T-cell (primary cell): ENCODE measurements at regions of chr2 and their contacts with region 1.

Region 1: DNA sequence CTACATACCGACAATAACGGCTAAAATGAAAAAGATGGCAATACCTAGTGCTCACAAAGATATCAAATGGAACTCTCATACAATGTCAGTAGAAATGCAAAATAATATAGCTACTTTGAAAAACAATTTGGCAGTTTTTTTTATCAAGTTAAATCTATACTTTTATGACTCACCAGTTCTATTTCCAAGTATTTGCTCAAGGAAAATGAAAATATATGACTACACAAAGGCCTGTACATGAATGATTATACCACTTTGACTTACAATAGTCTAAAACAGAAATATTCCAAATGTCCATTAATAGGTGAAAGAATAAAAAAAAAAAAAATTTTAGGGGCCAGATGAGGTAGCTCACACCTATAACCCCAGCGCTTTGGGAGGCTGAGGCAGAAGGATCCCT is 219.8 kb downstream of the ZRANB3 start:
- DNase-seq: no peak
- ATAC-seq: no peak
- H3K4me3 ChIP-seq: no peak overlapping the region
- H3K4me3 Mint-ChIP-seq: no peak overlapping the region
- H3K27ac ChIP-seq: no peak overlapping the region
- H3K27ac Mint-ChIP-seq: no peak overlapping the region
- H3K4me1 ChIP-seq: no peaks in the 10 kb centered on the region
- H3K4me1 Mint-ChIP-seq: no peaks in the 10 kb centered on the region
- H3K27me3 ChIP-seq: no peaks in the 10 kb centered on the region
- H3K27me3 Mint-ChIP-seq: no peaks in the 10 kb centered on the region

Region 2: GRCh38 chr2:134406311-134406710 is 905.0 kb before region 1 on chr2:
- CTCF ChIA-PET with region 1: no interaction called
- POLR2A ChIA-PET with region 1: interaction called in 1 of 2 experiments, 10 read pairs
- DNase-seq: peak in 1 of 35 experiments; percentile 3
- ATAC-seq: no peak
- H3K4me3 ChIP-seq: no peak overlapping the region
- H3K4me3 Mint-ChIP-seq: no peak overlapping the region
- H3K27ac ChIP-seq: no peak overlapping the region
- H3K27ac Mint-ChIP-seq: peak overlapping the region in 1 of 2 donors; percentile 44
- H3K4me1 ChIP-seq: peaks cover 13 to 17% of the 10 kb centered on the region in 2 experiments
- H3K4me1 Mint-ChIP-seq: peaks cover 50 to 57% (median 51%) of the 10 kb centered on the region in 3 donors
- H3K27me3 ChIP-seq: no peaks in the 10 kb centered on the region
- H3K27me3 Mint-ChIP-seq: no peaks in the 10 kb centered on the region